Stomach (tissue), 19 donors: ENCODE measurements at regions of chr4 and their contacts with region 1.

Region 1: DNA sequence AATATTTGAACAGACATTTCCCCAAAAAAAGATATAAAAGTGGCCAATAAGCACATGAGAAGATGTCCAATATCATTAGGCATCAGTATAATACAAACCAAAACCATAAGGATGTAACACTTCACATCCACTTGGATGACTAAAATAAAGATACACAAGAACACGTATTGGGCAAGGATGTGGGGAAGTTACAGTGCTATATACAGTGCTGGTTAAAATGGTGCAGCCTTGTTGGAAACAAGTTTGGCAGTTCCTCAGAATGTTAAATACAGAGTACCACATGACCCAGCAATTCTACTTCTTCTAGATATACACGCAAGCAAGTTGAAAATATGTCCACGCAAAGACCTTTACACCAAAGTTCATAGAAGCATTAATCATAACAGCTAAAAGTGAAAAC is 58.9 kb downstream of the HAUS3 start:
- DNase-seq: no peak
- H3K4me3 ChIP-seq: no peak overlapping the region
- H3K27ac ChIP-seq: no peak overlapping the region
- H3K4me1 ChIP-seq: no peaks in the 10 kb centered on the region
- H3K27me3 ChIP-seq: no peaks in the 10 kb centered on the region
- CTCF ChIP-seq: no peak
- EP300 ChIP-seq: no peak
- POLR2A ChIP-seq: no peak

Region 2: DNA sequence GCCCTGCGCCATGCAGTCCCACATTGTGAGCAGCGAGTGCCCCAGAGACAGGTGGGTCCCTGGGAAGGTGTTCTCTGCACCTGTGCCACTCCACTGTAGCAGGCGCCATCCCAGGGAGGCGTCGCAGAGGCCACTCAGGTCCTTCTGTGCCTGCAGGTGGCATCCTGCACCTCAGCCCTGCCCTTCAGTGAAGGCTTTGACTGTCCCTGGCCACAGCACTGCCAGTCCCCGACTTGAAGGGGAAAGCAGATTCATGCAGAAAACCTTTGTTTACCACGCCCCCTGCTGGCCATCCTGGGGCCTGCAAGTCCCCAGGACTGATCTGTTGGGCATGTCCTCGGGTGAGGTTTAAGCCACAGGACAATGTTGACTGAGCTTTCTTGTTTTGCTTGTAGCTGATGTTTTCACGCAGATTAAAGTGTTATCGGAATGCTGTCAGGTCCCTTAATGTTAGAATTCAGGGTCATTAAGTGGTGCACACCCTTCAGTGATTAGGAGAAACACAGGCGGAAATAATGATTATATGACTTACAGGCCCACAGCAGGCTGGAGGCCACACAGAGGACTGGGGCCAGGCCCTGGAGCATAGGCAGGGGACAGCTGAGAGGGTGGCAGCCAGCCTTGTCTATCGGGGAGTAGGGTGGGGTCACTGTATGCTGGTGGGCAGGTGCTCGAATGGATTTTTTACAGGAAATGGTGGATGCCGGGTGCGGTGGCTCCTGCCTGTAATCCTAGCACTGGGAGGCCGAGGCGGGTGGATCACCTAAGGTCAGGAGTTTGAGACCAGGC is 456.7 kb before region 1 on chr4:
- intact Hi-C with region 1: no loop called
- DNase-seq: peak; percentile 94 to 96
- H3K4me3 ChIP-seq: peak overlapping the region in 1 of 4 donors; percentile 13
- H3K27ac ChIP-seq: peak overlapping the region; percentile 37 to 83 (median 67)
- H3K4me1 ChIP-seq: peaks cover 38 to 80% (median 60%) of the 10 kb centered on the region in 4 donors
- H3K27me3 ChIP-seq: no peaks in the 10 kb centered on the region
- CTCF ChIP-seq: peak in 6 of 7 experiments; percentile 73 to 100 (median 98)
- EP300 ChIP-seq: no peak
- POLR2A ChIP-seq: no peak

Region 3: DNA sequence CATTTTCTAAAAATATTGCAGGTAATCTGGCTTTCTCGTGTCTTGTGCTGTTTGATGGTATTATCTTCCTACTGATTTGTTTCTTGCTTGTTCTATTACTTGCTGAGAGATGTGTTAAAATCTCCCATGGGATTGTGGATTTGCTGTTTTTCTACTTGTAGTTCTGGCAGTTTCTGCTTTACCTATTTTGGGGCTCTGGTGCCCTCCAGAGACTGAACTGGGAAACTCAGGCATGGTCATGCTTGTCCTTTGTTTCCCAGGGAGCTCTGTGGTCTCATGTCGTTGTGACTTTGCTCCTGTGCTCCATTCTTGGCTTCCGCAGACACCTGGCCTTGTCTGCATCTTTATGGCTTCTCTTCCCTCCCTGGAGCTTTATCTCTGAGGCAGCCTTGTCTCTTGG is 272.4 kb before region 1 on chr4:
- intact Hi-C with region 1: loop called (anchors 5 kb)
- DNase-seq: peak; percentile 34 to 79
- H3K4me3 ChIP-seq: no peak overlapping the region
- H3K27ac ChIP-seq: no peak overlapping the region
- H3K4me1 ChIP-seq: peaks cover 0 to 13% (median 7%) of the 10 kb centered on the region in 4 donors
- H3K27me3 ChIP-seq: no peaks in the 10 kb centered on the region
- CTCF ChIP-seq: peak in 5 of 7 experiments; percentile 15 to 49 (median 16)
- EP300 ChIP-seq: no peak
- POLR2A ChIP-seq: no peak

Region 4: GRCh38 chr4:2241410-2242353 is 58.7 kb after region 1 on chr4 and contains the starts of genes HAUS3 and POLN:
- intact Hi-C with region 1: no loop called
- DNase-seq: peak; percentile 99
- H3K4me3 ChIP-seq: peak within 1 kb of the TSS; percentile 69 to 97 (median 93)
- H3K27ac ChIP-seq: peak within 1 kb of the TSS; percentile 83 to 89 (median 86)
- H3K4me1 ChIP-seq: peaks cover 14 to 91% (median 51%) of the 10 kb centered on the region in 4 donors
- H3K27me3 ChIP-seq: no peaks in the 10 kb centered on the region
- CTCF ChIP-seq: no peak
- EP300 ChIP-seq: no peak
- POLR2A ChIP-seq: peak in 1 of 4 donors; percentile 48
- total RNA-seq, gene HAUS3: 7.6 to 37.4 (median 17.5) TPM
- total RNA-seq, gene POLN: 0.29 to 5.1 (median 1.4) TPM in 3 of 5 donors, not detected in the others